ENCODE measurements at regions of chr2 and their contacts with region 1.

Region 1: GRCh38 chr2:173027181-173028128 is 48.2 kb upstream of the MAP3K20 start:
- DNase-seq: peak; percentile 62 to 68 (median 65)
- H3K4me3 ChIP-seq: no peak overlapping the region
- H3K4me3 Mint-ChIP-seq: peak overlapping the region in 1 of 8 donors; percentile 41
- H3K27ac ChIP-seq: no peak overlapping the region
- H3K27ac Mint-ChIP-seq: no peak overlapping the region
- H3K4me1 ChIP-seq: no peaks in the 10 kb centered on the region
- H3K4me1 Mint-ChIP-seq: peaks cover 0 to 3% (median 1%) of the 10 kb centered on the region in 4 donors
- H3K27me3 ChIP-seq: no peaks in the 10 kb centered on the region
- H3K27me3 Mint-ChIP-seq: peaks cover 3 to 10% of the 10 kb centered on the region in 2 donors

Region 2: DNA sequence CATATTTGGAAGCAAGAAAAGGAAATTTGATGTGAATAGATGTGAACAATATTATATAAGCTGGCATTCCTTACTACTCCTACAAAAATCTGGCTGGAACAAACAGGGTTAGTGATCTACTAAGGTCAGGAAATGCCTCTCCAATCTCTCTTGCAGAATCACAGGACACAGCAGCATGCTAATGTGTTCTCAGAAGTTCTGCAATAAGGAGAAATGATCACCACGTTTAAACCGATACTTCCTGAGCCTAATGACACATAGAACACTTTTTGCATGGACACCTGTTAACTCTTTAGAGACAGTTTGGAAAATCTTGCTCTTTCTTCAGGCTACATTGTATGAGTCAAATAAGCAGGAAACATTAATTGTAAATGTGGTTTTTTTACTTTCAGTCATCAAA is 41.4 kb before region 1 on chr2:
- CTCF ChIA-PET with region 1: no interaction called
- POLR2A ChIA-PET with region 1: no interaction called
- intact Hi-C with region 1: no loop called
- DNase-seq: no peak
- H3K4me3 ChIP-seq: no peak overlapping the region
- H3K4me3 Mint-ChIP-seq: no peak overlapping the region
- H3K27ac ChIP-seq: no peak overlapping the region
- H3K27ac Mint-ChIP-seq: no peak overlapping the region
- H3K4me1 ChIP-seq: no peaks in the 10 kb centered on the region
- H3K4me1 Mint-ChIP-seq: peaks cover 0 to 7% (median 1%) of the 10 kb centered on the region in 4 donors
- H3K27me3 ChIP-seq: no peaks in the 10 kb centered on the region
- H3K27me3 Mint-ChIP-seq: peaks cover 6 to 23% of the 10 kb centered on the region in 2 donors

Region 3: DNA sequence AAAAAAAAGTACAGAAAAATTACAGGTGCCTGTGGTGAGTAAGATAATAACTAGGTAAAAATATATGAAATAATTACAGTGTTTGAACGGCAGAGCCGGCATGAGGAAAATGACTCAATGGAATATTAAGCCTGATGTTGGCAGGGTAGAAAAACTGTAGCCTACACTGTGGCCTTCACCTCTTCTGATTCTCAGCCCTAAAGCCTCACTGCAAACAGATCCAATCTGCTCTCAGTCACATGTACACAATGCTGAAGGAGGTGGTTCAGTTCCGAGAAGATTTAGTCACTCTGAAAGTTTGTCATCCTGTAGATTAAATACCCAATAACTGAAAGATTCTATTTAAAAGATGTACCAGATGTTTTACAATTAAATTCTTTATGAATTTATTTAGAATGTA is 18.7 kb before region 1 on chr2:
- CTCF ChIA-PET with region 1: interaction called, 19 read pairs
- POLR2A ChIA-PET with region 1: no interaction called
- intact Hi-C with region 1: no loop called
- DNase-seq: no peak
- H3K4me3 ChIP-seq: no peak overlapping the region
- H3K4me3 Mint-ChIP-seq: no peak overlapping the region
- H3K27ac ChIP-seq: no peak overlapping the region
- H3K27ac Mint-ChIP-seq: no peak overlapping the region
- H3K4me1 ChIP-seq: no peaks in the 10 kb centered on the region
- H3K4me1 Mint-ChIP-seq: no peaks in the 10 kb centered on the region
- H3K27me3 ChIP-seq: no peaks in the 10 kb centered on the region
- H3K27me3 Mint-ChIP-seq: peaks cover 18% of the 10 kb centered on the region in 2 donors

Region 4: GRCh38 chr2:173037245-173038120 is 10.0 kb after region 1 on chr2:
- CTCF ChIA-PET with region 1: interaction called, 12 read pairs
- POLR2A ChIA-PET with region 1: no interaction called
- intact Hi-C with region 1: no loop called
- DNase-seq: no peak
- H3K4me3 ChIP-seq: no peak overlapping the region
- H3K4me3 Mint-ChIP-seq: no peak overlapping the region
- H3K27ac ChIP-seq: no peak overlapping the region
- H3K27ac Mint-ChIP-seq: no peak overlapping the region
- H3K4me1 ChIP-seq: no peaks in the 10 kb centered on the region
- H3K4me1 Mint-ChIP-seq: no peaks in the 10 kb centered on the region
- H3K27me3 ChIP-seq: no peaks in the 10 kb centered on the region
- H3K27me3 Mint-ChIP-seq: peaks cover 2 to 3% of the 10 kb centered on the region in 2 donors

Region 5: DNA sequence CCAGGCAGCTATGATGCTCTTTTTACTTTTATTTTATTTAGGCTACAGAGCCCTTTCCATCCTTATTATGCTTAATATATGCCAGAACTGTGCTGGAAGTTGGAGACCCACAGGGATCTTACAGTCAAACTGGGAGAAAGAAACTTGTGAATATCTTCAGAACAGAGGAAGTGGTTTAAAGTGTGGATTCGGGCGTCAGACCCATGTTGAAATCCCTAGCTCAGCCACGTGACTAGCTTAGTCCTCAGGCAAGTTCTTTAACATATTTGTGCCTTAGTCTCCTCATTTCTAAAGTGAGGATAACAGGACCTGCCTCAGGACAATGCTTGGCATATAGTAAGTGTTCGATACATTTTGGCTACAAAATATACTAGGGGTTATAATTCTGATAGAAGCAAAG is 107.2 kb after region 1 on chr2:
- CTCF ChIA-PET with region 1: no interaction called
- POLR2A ChIA-PET with region 1: no interaction called
- intact Hi-C with region 1: no loop called
- DNase-seq: no peak
- H3K4me3 ChIP-seq: no peak overlapping the region
- H3K4me3 Mint-ChIP-seq: peak overlapping the region in 1 of 8 donors; percentile 35
- H3K27ac ChIP-seq: no peak overlapping the region
- H3K27ac Mint-ChIP-seq: no peak overlapping the region
- H3K4me1 ChIP-seq: peaks cover 20% of the 10 kb centered on the region
- H3K4me1 Mint-ChIP-seq: peaks cover 16 to 29% (median 24%) of the 10 kb centered on the region in 4 donors
- H3K27me3 ChIP-seq: no peaks in the 10 kb centered on the region
- H3K27me3 Mint-ChIP-seq: peaks cover 0 to 3% of the 10 kb centered on the region in 2 donors

Region 6: DNA sequence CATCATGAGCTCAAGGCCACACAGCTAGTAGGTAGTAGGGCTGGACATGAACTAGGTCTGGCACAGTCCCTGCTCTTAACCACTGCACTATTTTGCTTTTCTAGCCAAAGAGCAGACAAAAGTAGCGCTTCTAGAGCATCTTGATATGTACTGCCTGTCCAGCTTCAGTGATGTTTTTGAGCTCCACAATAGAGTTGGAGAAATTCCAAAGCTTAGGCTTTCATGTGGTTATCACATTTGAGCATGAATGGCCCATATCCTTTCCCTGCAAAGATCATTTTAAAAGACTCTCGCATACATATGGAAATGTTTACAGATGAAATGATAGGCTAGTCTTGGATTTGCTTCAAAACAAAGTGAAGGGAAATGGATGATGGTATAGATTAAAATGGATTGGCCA is 176.9 kb after region 1 on chr2:
- CTCF ChIA-PET with region 1: interaction called, 360 read pairs
- POLR2A ChIA-PET with region 1: no interaction called
- intact Hi-C with region 1: no loop called
- DNase-seq: no peak
- H3K4me3 ChIP-seq: no peak overlapping the region
- H3K4me3 Mint-ChIP-seq: no peak overlapping the region
- H3K27ac ChIP-seq: no peak overlapping the region
- H3K27ac Mint-ChIP-seq: no peak overlapping the region
- H3K4me1 ChIP-seq: no peaks in the 10 kb centered on the region
- H3K4me1 Mint-ChIP-seq: no peaks in the 10 kb centered on the region
- H3K27me3 ChIP-seq: no peaks in the 10 kb centered on the region
- H3K27me3 Mint-ChIP-seq: no peaks in the 10 kb centered on the region

Region 7: DNA sequence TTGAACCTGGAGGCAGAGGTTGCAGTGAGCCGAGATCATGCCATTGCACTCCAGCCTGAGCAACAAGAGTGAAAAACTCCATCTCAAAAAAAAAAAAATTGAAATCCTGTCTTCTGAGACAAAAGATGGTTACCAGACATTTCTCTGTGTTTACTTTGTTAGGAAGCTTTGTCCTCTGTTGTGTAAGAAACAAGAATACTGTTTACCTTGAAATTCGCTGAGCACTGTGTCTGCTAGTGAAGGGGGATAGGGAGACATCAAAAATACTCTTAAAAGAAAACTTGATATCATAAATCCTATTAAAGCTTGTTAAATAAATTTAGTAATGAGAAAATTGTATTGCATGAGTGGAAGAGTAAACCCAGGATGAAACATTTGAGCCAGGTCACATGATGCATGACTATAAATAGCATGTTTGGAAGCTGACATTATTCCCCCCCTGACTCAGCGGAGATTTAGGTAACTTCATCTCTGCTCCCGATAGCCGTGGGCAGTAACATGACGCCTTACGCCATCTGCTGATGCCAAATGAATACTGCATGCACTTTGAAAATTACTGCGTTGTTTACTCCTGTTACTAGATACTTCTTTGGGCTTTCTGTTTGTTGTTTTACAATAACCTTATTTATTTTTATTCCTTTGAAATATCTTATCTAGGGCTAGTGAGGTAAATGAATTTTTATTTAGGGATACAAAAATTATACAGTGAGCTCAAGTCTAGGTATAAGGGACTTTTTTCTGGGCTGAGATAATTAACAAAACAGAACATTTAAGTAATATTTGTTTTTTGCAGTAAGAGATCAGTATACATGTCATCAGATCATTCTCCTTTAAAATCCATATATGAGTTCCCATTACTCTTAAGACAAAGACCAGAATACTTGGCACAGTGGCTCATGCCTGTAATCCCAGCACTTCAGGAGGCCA is 183.1 kb after region 1 on chr2:
- CTCF ChIA-PET with region 1: interaction called, 360 read pairs
- POLR2A ChIA-PET with region 1: interaction called, 3 read pairs
- intact Hi-C with region 1: no loop called
- DNase-seq: peak; percentile 34 to 50 (median 47)
- H3K4me3 ChIP-seq: no peak overlapping the region
- H3K4me3 Mint-ChIP-seq: no peak overlapping the region
- H3K27ac ChIP-seq: no peak overlapping the region
- H3K27ac Mint-ChIP-seq: peak overlapping the region in 1 of 7 donors; percentile 28
- H3K4me1 ChIP-seq: no peaks in the 10 kb centered on the region
- H3K4me1 Mint-ChIP-seq: peaks cover 0 to 2% (median 0%) of the 10 kb centered on the region in 4 donors
- H3K27me3 ChIP-seq: no peaks in the 10 kb centered on the region
- H3K27me3 Mint-ChIP-seq: peaks cover 3 to 4% of the 10 kb centered on the region in 2 donors

Measured in CD4-positive, alpha-beta memory T cell (primary cell).